ENCODE measurements at regions of chr16 and their contacts with region 1.

Region 1: GRCh38 chr16:3150346-3151218 is 15.8 kb downstream of the ZNF213 start:
- DNase-seq: peak; percentile 98
- H3K4me3 Mint-ChIP-seq: peak overlapping the region; percentile 85
- H3K27ac Mint-ChIP-seq: peak overlapping the region; percentile 93
- H3K4me1 Mint-ChIP-seq: peaks cover 33% of the 10 kb centered on the region
- H3K27me3 Mint-ChIP-seq: peaks cover 10% of the 10 kb centered on the region

Region 2: GRCh38 chr16:3173892-3174617 is 23.5 kb after region 1 on chr16:
- intact Hi-C with region 1: loop called (anchors 1 kb)
- DNase-seq: no peak
- H3K4me3 Mint-ChIP-seq: peak overlapping the region; percentile 72
- H3K27ac Mint-ChIP-seq: peak overlapping the region; percentile 48
- H3K4me1 Mint-ChIP-seq: peaks cover 29% of the 10 kb centered on the region
- H3K27me3 Mint-ChIP-seq: peaks cover 68% of the 10 kb centered on the region

Region 3: DNA sequence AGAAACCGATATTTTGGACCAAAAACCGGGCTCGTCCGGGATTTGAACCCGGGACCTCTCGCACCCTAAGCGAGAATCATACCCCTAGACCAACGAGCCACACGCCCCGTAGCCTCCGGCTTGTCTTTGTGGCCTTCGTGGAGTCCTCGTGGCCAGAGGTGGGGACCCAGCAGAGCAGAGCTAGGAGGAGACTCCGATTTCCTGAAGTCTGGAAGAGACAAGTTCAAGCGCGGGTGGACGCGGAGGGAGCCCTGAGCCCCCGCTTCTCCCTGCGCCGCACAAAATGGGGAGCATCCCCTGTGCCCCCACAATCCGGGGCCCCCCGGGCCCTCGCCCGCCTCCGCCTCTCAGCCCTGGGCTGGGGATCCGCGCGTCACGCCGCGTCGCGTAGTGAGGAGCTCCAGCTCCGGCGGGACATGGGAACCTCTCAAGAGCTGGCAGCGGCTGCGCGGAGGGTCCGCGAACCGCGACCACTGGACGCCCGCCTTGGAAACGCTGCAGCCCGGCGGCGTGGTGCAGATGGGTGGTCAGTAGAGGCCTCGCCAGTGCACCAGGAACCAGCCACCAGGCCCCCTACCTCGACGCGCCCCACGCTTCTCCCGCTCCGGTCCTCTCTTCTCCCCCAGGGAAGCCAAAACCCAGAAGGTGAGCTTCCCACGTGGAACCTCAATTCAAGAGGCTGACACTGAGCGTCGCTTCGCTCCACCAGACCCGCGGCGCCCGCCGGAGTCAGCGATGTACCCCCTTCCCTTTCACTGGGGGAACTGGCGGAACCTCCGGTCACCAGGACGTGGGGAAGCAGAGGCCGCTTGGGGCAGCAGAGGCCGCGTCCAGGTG is 32.2 kb after region 1 on chr16:
- intact Hi-C with region 1: loop called (anchors 2 kb)
- DNase-seq: no peak
- H3K4me3 Mint-ChIP-seq: peak overlapping the region; percentile 83
- H3K27ac Mint-ChIP-seq: peak overlapping the region; percentile 94
- H3K4me1 Mint-ChIP-seq: peaks cover 28% of the 10 kb centered on the region
- H3K27me3 Mint-ChIP-seq: peaks cover 68% of the 10 kb centered on the region

Region 4: DNA sequence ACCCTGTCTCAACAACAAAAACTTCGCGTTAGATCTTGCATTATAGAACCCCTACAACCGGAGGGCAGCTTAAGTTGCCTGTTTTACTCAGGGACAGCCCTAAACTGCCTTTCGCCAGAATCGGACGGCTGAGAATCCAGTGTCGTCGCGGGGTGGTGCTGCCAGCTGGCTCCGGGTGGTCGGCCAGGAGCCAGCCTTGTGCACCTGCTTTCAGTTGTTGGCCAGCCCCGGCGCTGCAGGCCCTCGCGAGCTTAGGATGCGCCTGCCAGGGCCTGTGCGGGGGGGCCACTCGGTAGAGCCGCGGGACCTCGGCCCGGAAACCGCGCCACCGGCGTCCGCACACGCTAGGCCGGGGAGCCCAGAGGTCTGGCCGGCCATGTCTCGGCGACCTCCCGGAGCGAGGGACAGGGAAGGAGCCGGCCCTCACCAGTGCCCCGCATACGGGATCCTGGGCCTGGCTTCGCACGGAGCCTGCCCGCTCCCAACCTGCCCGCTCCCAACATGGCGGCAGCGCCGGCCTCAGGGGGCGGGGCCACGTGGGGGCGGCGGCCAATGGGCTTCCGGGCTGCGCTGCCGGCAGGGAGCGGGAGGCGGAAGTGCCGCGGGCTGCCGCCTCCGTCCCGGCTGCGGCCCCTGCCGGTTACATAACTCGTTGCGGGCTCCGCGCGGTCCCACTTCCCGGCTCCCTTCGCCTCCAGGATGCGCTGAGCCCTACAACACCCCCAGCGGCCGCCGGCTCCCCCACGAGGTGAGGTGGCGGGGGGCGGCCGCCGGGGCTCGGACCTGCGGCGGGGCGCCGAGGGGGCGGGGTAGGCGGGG is 307.1 kb after region 1 on chr16:
- intact Hi-C with region 1: loop called (anchors 1 kb)
- DNase-seq: peak; percentile 88
- H3K4me3 Mint-ChIP-seq: peak overlapping the region; percentile 83
- H3K27ac Mint-ChIP-seq: peak overlapping the region; percentile 77
- H3K4me1 Mint-ChIP-seq: peaks cover 42% of the 10 kb centered on the region
- H3K27me3 Mint-ChIP-seq: no peaks in the 10 kb centered on the region

Measured in activated T-helper 1 cell treated with anti-CD3 and anti-CD28 coated beads, Interleukin-12 subunit alpha, Interleukin-12 subunit beta, Interleukin-2, Interleukin-4 antibody, amounts not matched to agents 30 ng/mL and 10 ng/mL and 1 ng/mL, durations not matched to agents 14 hours and 24 hours and 36 hours (primary cell).